ENCODE measurements at regions of chr12 and their contacts with region 1.

Region 1: DNA sequence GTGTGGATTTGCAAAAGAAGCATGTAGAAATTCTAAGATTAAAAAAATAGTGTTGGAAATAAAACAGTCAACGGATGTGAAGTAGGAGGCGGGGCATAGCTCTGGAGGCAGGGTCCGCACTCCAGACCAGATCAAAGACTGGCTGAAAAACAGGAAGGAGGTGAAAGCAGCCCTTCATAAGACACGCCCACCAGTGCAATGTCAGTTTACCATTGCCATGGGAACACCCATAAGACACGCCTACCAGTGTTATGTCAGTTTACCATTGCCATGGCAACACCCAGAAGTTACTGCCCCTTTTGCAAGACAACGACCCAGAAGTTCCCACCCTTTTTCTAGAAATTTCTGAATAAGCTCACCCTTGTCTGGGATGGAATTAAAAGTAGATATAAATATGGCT is 87.1 kb downstream of the FZD10 start:
- DNase-seq: no peak
- ATAC-seq: no peak
- H3K4me3 ChIP-seq: no peak overlapping the region
- H3K27ac ChIP-seq: no peak overlapping the region
- H3K4me1 ChIP-seq: no peaks in the 10 kb centered on the region
- H3K27me3 ChIP-seq: no peaks in the 10 kb centered on the region

Region 2: DNA sequence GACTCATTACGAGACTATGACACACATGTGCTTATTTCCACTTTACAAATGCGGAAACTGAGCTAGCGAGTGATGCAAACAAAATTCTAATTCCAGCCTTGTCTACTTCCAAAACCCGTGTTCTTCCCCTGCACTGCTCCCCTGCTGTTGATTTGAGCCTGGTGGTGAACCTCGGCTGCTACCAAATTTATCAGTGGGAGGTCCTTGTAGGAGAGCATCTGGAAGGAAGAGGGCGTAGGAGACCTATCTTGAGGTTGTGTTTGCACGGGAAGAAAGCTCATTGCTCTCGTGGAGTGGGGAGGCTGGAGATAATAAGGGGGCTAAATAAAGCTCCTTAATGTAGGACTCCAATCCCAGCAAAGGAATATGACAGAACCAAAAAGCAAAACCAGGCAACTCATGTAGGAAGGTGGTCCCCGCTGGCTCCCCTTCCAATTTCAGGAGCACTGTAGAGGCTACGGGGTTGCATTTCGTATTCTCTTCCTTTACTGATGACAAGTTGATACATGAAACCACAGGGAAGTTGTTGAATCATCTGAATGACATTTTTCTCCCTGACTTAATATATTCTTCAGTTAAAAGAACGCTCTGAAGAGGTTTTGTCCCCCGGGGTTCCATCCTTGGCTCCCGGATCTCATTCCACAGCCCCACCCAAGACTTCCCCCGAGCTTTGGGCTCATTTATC is 34.5 kb before region 1 on chr12:
- intact Hi-C with region 1: loop called in 1 of 2 experiments (anchors 1 kb)
- DNase-seq: no peak
- ATAC-seq: no peak
- H3K4me3 ChIP-seq: no peak overlapping the region
- H3K27ac ChIP-seq: no peak overlapping the region
- H3K4me1 ChIP-seq: no peaks in the 10 kb centered on the region
- H3K27me3 ChIP-seq: no peaks in the 10 kb centered on the region

Measured in aorta (tissue), 5 donors.